HEK293 (cell line): ENCODE measurements at regions of chr11 and their contacts with region 1.

Region 1: DNA sequence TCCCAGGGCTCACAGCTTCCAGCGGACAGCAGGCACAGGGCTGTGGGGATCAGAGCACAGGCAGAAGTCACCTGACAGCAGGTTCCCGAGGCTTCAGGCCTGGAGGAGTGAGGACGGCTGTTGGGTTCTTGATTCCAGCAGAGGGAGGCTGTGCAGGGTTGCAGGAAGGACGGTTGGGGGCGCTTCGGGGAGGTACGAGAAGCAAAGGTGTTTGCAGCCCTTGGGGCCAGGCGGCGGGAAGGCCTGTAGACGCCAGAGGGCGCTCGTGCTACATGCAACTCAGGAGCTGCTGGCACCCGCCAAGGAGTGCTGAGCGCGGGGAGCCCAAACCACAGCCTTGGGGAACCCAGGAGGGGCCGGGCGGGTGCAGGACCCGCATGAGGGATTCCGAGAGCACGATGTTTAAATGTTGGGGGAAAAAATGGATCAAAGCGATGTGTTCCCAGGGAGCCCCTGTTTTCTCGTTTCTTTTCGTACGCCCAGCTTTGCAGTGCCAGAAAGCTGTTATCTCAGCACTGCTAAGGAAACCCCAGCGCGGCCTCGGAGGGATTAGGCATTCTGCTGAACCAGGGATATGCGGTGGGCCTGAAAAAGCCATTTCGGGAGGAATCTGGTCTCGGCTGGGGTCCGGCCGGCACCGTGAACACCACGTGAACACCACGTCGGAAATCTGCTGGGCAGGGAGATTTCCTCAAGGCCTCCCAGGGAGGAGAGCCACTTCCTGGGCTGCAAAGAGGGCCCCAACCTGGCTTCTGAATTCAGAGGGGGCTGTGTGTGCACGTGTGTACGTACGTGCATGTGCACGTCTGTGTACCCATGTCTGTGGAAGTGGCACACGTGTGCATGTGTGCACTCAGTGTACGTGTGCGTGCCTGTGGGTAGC is 88.1 kb downstream of the KCNQ1 start:
- H3K4me3 ChIP-seq: no peak overlapping the region
- H3K27ac ChIP-seq: no peak overlapping the region
- H3K4me1 ChIP-seq: no peaks in the 10 kb centered on the region
- CTCF ChIP-seq: peak; percentile 93

Region 2: GRCh38 chr11:2293984-2294925 is 238.7 kb before region 1 on chr11:
- CTCF ChIA-PET with region 1: no interaction called
- POLR2A ChIA-PET with region 1: no interaction called
- H3K4me3 ChIP-seq: no peak overlapping the region
- H3K27ac ChIP-seq: no peak overlapping the region
- H3K4me1 ChIP-seq: no peaks in the 10 kb centered on the region
- CTCF ChIP-seq: no peak

Region 3: GRCh38 chr11:2431395-2431794 is 101.5 kb before region 1 on chr11:
- CTCF ChIA-PET with region 1: interaction called, 208 read pairs
- POLR2A ChIA-PET with region 1: no interaction called
- H3K4me3 ChIP-seq: no peak overlapping the region
- H3K27ac ChIP-seq: no peak overlapping the region
- H3K4me1 ChIP-seq: no peaks in the 10 kb centered on the region
- CTCF ChIP-seq: no peak

Region 4: GRCh38 chr11:2436521-2437031 is 96.4 kb before region 1 on chr11:
- CTCF ChIA-PET with region 1: interaction called, 24 read pairs
- POLR2A ChIA-PET with region 1: no interaction called
- H3K4me3 ChIP-seq: no peak overlapping the region
- H3K27ac ChIP-seq: no peak overlapping the region
- H3K4me1 ChIP-seq: no peaks in the 10 kb centered on the region
- CTCF ChIP-seq: no peak

Region 5: GRCh38 chr11:2584812-2585565 is 52.0 kb after region 1 on chr11:
- CTCF ChIA-PET with region 1: no interaction called
- POLR2A ChIA-PET with region 1: no interaction called
- H3K4me3 ChIP-seq: no peak overlapping the region
- H3K27ac ChIP-seq: no peak overlapping the region
- H3K4me1 ChIP-seq: no peaks in the 10 kb centered on the region
- CTCF ChIP-seq: no peak

Region 6: GRCh38 chr11:2612884-2613571 is 80.1 kb after region 1 on chr11:
- CTCF ChIA-PET with region 1: no interaction called
- POLR2A ChIA-PET with region 1: no interaction called
- H3K4me3 ChIP-seq: no peak overlapping the region
- H3K27ac ChIP-seq: no peak overlapping the region
- H3K4me1 ChIP-seq: no peaks in the 10 kb centered on the region
- CTCF ChIP-seq: no peak

Region 7: GRCh38 chr11:2711161-2711560 is 178.2 kb after region 1 on chr11:
- CTCF ChIA-PET with region 1: no interaction called
- POLR2A ChIA-PET with region 1: no interaction called
- H3K4me3 ChIP-seq: no peak overlapping the region
- H3K27ac ChIP-seq: no peak overlapping the region
- H3K4me1 ChIP-seq: no peaks in the 10 kb centered on the region
- CTCF ChIP-seq: no peak

Region 8: GRCh38 chr11:2885676-2886081 is 352.7 kb after region 1 on chr11 and contains the start of gene CDKN1C:
- CTCF ChIA-PET with region 1: interaction called, 456 read pairs
- POLR2A ChIA-PET with region 1: interaction called, 15 read pairs
- H3K4me3 ChIP-seq: peak within 1 kb of the TSS; percentile 47
- H3K27ac ChIP-seq: no peak within 1 kb of the TSS
- H3K4me1 ChIP-seq: no peaks in the 10 kb centered on the region
- CTCF ChIP-seq: no peak

Region 9: GRCh38 chr11:2892215-2893020 is 359.5 kb after region 1 on chr11:
- CTCF ChIA-PET with region 1: interaction called, 456 read pairs
- POLR2A ChIA-PET with region 1: interaction called, 15 read pairs
- H3K4me3 ChIP-seq: no peak overlapping the region
- H3K27ac ChIP-seq: no peak overlapping the region
- H3K4me1 ChIP-seq: no peaks in the 10 kb centered on the region
- CTCF ChIP-seq: peak; percentile 71

Region 10: GRCh38 chr11:2901854-2902783 is 369.2 kb after region 1 on chr11:
- CTCF ChIA-PET with region 1: interaction called, 21 read pairs
- POLR2A ChIA-PET with region 1: interaction called, 5 read pairs
- H3K4me3 ChIP-seq: peak overlapping the region; percentile 57
- H3K27ac ChIP-seq: no peak overlapping the region
- H3K4me1 ChIP-seq: no peaks in the 10 kb centered on the region
- CTCF ChIP-seq: no peak